ENCODE measurements at regions of chr2 and their contacts with region 1.

Region 1: DNA sequence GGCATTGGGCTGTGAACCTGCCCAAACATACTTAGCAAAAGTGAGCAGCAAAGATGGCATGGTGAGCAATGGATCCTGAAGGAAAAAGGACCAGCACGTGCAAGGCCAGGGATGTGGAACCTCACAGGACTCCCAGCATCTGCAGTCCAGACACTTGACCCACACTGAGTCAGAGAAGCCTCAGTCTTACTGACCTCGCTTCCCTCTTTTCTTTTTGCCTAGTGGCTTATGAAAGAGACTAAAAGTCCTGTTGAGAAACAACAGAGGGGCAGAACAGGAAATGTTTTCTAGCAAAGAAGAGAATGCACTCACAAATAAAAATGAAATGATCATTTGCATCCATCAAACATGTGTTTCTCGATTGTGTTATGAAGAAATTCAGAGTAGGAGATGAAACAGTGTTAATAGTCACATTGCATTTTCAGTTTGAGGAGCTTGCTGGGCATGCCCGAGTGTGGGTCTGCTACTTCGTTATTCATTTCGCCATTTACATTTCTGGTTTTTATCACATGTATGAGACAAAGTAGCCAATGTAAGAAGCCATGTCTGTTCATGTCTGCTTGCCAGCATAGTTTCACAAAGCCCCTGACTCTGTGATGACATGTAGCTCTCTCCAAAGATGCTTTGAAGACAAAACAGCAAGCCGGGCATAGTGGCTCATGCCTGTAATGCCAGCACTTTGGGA is 118.4 kb downstream of the INO80D start:
- DNase-seq: peak; percentile 52
- H3K4me3 Mint-ChIP-seq: no peak overlapping the region
- H3K27ac Mint-ChIP-seq: peak overlapping the region; percentile 18
- H3K4me1 Mint-ChIP-seq: peaks cover 18% of the 10 kb centered on the region
- H3K27me3 Mint-ChIP-seq: peaks cover 16% of the 10 kb centered on the region

Region 2: DNA sequence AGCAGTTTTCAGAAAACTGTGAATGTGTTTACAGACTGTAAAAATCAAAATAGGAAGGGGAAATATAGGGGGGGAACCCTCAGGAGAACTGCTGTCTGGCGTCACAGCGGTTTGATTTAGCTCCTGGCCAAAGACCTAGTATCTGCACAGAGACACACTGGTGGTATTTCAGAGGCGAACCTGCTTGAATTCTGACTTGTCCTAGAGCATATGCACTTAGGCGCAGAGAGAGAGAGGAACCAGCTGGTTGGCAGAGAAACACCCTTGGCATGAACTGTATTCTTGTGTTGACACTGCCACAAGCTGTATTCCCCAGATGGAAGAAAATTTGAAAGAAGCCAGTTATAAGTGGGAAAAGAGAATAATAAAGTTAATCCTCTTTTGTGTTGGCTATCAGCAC is 791.7 kb before region 1 on chr2:
- CTCF ChIA-PET with region 1: no interaction called
- POLR2A ChIA-PET with region 1: no interaction called
- intact Hi-C with region 1: no loop called
- DNase-seq: no peak
- H3K4me3 Mint-ChIP-seq: no peak overlapping the region
- H3K27ac Mint-ChIP-seq: no peak overlapping the region
- H3K4me1 Mint-ChIP-seq: no peaks in the 10 kb centered on the region
- H3K27me3 Mint-ChIP-seq: no peaks in the 10 kb centered on the region

Region 3: DNA sequence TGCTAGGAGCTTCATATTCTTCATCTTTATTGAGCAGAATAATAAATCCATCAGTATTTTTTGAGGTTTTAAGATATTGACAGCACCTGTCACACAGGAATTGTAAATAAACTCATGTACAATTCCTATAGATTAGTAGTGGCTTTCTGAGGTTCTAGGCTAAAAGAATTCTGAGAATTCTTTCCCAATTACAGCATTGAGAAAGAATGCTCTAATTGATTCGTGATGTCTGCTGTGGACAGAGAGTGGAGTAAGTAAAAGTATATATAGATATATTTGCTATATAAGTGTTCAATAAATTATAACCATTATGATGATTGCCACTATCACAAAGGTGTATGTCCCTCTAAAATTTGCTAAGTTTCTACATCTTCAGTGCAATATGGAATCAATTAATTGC is 471.7 kb before region 1 on chr2:
- CTCF ChIA-PET with region 1: no interaction called
- POLR2A ChIA-PET with region 1: no interaction called
- intact Hi-C with region 1: no loop called
- DNase-seq: no peak
- H3K4me3 Mint-ChIP-seq: no peak overlapping the region
- H3K27ac Mint-ChIP-seq: no peak overlapping the region
- H3K4me1 Mint-ChIP-seq: no peaks in the 10 kb centered on the region
- H3K27me3 Mint-ChIP-seq: no peaks in the 10 kb centered on the region

Region 4: GRCh38 chr2:205984381-205984780 is 16.8 kb after region 1 on chr2:
- CTCF ChIA-PET with region 1: no interaction called
- POLR2A ChIA-PET with region 1: no interaction called
- intact Hi-C with region 1: loop called (anchors 1 kb)
- DNase-seq: no peak
- H3K4me3 Mint-ChIP-seq: peak overlapping the region; percentile 39
- H3K27ac Mint-ChIP-seq: peak overlapping the region; percentile 35
- H3K4me1 Mint-ChIP-seq: peaks cover 2% of the 10 kb centered on the region
- H3K27me3 Mint-ChIP-seq: no peaks in the 10 kb centered on the region

Measured in activated CD4-positive, alpha-beta memory T cell treated with anti-CD3 and anti-CD28 coated beads for 36 hours (primary cell).